Dendritic cell treated with granulocyte-macrophage colony-stimulating factor and Interleukin-4, amounts not matched to agents 40 ng/mL and 50 ng/mL, for 4 days (primary cell): ENCODE measurements at regions of chr2 and their contacts with region 1.

Region 1: GRCh38 chr2:217166241-217166850 is 306.5 kb upstream of the TNP1 start:
- H3K4me3 Mint-ChIP-seq: no peak overlapping the region
- H3K27ac Mint-ChIP-seq: no peak overlapping the region
- H3K4me1 Mint-ChIP-seq: peaks cover 15% of the 10 kb centered on the region
- H3K27me3 Mint-ChIP-seq: peaks cover 90% of the 10 kb centered on the region

Region 2: DNA sequence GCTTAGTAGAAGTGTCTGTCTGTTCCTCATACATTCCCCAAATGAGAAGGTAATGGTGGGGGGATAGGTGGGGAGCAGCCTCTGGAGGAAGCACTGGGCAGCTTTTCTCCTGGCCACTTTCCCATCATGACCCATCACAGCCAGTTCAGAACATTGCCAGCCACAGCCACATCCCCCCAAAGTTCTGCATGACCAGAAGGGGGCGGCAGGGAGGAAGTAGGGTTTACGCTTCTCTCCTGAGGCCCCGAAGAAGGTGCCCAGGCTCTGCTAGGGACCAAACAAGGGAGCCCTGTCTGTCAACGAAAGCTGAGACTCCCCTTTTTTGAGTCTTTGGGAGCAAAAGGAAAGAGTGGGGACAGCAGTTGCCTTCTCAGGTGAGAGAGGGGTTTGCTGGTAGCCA is 478.7 kb before region 1 on chr2:
- intact Hi-C with region 1: loop called (anchors 2 kb)
- H3K4me3 Mint-ChIP-seq: no peak overlapping the region
- H3K27ac Mint-ChIP-seq: no peak overlapping the region
- H3K4me1 Mint-ChIP-seq: peaks cover 21% of the 10 kb centered on the region
- H3K27me3 Mint-ChIP-seq: peaks cover 69% of the 10 kb centered on the region

Region 3: GRCh38 chr2:216698895-216699294 is 467.5 kb before region 1 on chr2:
- intact Hi-C with region 1: loop called (anchors 2 kb)
- H3K4me3 Mint-ChIP-seq: no peak overlapping the region
- H3K27ac Mint-ChIP-seq: no peak overlapping the region
- H3K4me1 Mint-ChIP-seq: peaks cover 10% of the 10 kb centered on the region
- H3K27me3 Mint-ChIP-seq: peaks cover 48% of the 10 kb centered on the region

Region 4: DNA sequence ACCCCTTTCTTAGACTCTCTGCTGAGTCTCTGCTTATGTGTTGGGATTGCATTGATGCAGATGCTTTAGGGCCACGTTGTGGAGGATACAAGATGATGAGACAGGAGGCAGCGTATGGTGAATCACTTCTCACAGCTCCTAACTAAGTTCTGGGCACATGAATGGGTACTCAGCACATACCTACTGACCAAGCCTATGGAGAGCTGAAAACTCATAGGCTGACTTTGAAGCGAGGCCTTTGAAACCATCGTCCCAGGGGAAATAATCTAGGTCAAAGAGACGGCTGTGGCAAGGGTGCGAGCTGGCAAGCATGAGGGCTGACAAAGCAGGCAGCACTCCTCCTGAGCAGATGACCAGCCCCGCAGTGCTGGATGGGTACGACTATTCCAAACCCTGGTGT is 126.2 kb before region 1 on chr2:
- intact Hi-C with region 1: loop called (anchors 5 kb)
- H3K4me3 Mint-ChIP-seq: no peak overlapping the region
- H3K27ac Mint-ChIP-seq: no peak overlapping the region
- H3K4me1 Mint-ChIP-seq: no peaks in the 10 kb centered on the region
- H3K27me3 Mint-ChIP-seq: peaks cover 25% of the 10 kb centered on the region

Region 5: GRCh38 chr2:217316743-217317142 is 150.4 kb after region 1 on chr2:
- intact Hi-C with region 1: loop called (anchors 5 kb)
- H3K4me3 Mint-ChIP-seq: no peak overlapping the region
- H3K27ac Mint-ChIP-seq: no peak overlapping the region
- H3K4me1 Mint-ChIP-seq: peaks cover 21% of the 10 kb centered on the region
- H3K27me3 Mint-ChIP-seq: peaks cover 70% of the 10 kb centered on the region